Panc1 (cell line): ENCODE measurements at regions of chr6 and their contacts with region 1.

Region 1: GRCh38 chr6:138109042-138109997 is 2.1 kb upstream of the PERP start:
- DNase-seq: peak; percentile 88
- ATAC-seq: peak; percentile 42; the same call in 1 of the 2 replicates
- H3K4me3 ChIP-seq: peak overlapping the region; percentile 87 to 90
- H3K27ac ChIP-seq: peak overlapping the region; percentile 96
- H3K4me1 ChIP-seq: peaks cover 12% of the 10 kb centered on the region
- H3K27me3 ChIP-seq: no peaks in the 10 kb centered on the region
- CTCF ChIP-seq: peak; percentile 87; the same call in 1 of the 2 replicates

Region 2: DNA sequence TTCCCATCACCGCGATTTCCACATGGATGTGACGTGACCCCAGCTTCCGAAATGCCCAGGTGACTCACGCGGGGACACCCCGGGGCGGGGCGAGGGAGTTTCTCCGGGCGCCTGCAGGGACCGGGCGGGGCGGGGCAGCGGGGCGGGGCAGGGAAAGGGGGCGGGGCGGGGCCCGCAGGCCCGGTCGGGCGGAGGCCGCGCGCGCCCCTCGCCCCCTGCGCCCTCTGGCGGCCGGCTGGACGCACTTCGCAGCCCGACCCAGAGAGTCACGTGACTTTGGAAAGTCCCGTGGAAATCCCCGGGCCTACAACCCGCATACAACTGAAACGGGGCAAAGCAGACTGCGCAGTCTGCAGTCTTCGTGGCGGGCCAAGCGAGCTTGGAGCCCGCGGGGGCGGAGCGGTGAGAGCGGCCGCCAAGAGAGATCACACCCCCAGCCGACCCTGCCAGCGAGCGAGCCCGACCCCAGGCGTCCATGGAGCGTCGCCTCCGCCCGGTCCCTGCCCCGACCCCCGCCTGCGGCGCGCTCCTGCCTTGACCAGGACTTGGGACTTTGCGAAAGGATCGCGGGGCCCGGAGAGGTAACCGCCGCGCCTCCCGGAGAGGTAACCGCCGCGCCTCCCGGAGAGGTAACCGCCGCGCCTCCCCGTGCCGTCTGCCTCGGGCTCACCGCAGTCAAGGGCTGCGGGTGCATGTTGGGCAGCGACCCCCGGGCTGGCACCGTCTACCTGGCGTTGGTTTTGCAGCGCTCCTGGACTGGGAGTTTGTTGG is 242.2 kb before region 1 on chr6 and contains the start of gene TNFAIP3:
- CTCF ChIA-PET with region 1: no interaction called
- POLR2A ChIA-PET with region 1: no interaction called
- in situ Hi-C with region 1: no loop called
- intact Hi-C with region 1: loop called (anchors 5 kb)
- DNase-seq: peak; percentile 56
- ATAC-seq: peak; percentile 93
- H3K4me3 ChIP-seq: peak within 1 kb of the TSS; percentile 74 to 83
- H3K27ac ChIP-seq: peak within 1 kb of the TSS; percentile 59
- H3K4me1 ChIP-seq: peaks cover 23% of the 10 kb centered on the region
- H3K27me3 ChIP-seq: no peaks in the 10 kb centered on the region
- CTCF ChIP-seq: peak; percentile 97
- total RNA-seq, gene TNFAIP3: 15.0 TPM

Region 3: GRCh38 chr6:138088330-138088766 is 21.0 kb before region 1 on chr6:
- CTCF ChIA-PET with region 1: no interaction called
- POLR2A ChIA-PET with region 1: interaction called, 12 read pairs
- in situ Hi-C with region 1: no loop called
- intact Hi-C with region 1: loop called (anchors 2 kb)
- DNase-seq: peak; percentile 86
- ATAC-seq: peak; percentile 75
- H3K4me3 ChIP-seq: peak overlapping the region in 1 of 2 experiments; percentile 26; a peak in 2 of 4 replicates
- H3K27ac ChIP-seq: peak overlapping the region; percentile 100
- H3K4me1 ChIP-seq: peaks cover 76% of the 10 kb centered on the region
- H3K27me3 ChIP-seq: no peaks in the 10 kb centered on the region
- CTCF ChIP-seq: no peak

Region 4: DNA sequence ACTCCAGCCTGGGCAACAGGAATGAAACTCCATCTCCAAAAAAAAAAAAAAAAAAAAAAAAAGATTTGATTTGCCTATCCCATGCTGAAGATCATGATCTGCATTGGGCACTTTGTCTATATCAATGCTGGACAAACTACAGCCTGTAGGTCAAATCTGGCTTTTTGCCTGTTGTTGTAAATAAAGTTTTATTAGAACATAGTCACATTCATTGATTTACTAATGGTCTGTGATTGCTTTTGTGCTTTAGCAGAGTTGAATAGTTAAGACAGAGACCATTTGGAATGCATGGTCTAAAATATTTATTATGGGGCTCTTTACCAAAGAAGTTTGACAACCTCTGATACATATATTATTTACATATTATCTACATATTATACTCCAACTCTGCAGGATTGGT is 95.0 kb after region 1 on chr6:
- CTCF ChIA-PET with region 1: no interaction called
- POLR2A ChIA-PET with region 1: interaction called, 17 read pairs
- in situ Hi-C with region 1: no loop called
- intact Hi-C with region 1: no loop called
- DNase-seq: no peak
- ATAC-seq: no peak
- H3K4me3 ChIP-seq: no peak overlapping the region
- H3K27ac ChIP-seq: no peak overlapping the region
- H3K4me1 ChIP-seq: no peaks in the 10 kb centered on the region
- H3K27me3 ChIP-seq: 0 out of 2 replicates have a peak, but pooled peaks cover under 1% of the 10 kb centered on the region
- CTCF ChIP-seq: no peak